Heart left ventricle (tissue), 16 donors: ENCODE measurements at regions of chr17 and their contacts with region 1.

Region 1: GRCh38 chr17:48618256-48618897 is 3.3 kb upstream of the HOXB8 start:
- DNase-seq: peak; percentile 80 to 91 (median 85)
- ATAC-seq: peak; percentile 69 to 92 (median 89)
- H3K4me3 ChIP-seq: no peak overlapping the region
- H3K27ac ChIP-seq: no peak overlapping the region
- H3K4me1 ChIP-seq: peaks cover 0 to 22% (median 2%) of the 10 kb centered on the region in 12 donors
- H3K27me3 ChIP-seq: peaks cover 86 to 100% (median 98%) of the 10 kb centered on the region in 9 donors
- CTCF ChIP-seq: peak; percentile 95 to 99 (median 98)
- POLR2A ChIP-seq: no peak

Region 2: GRCh38 chr17:48024937-48025906 is 593.2 kb before region 1 on chr17:
- intact Hi-C with region 1: loop called in 5 of 10 experiments (anchors 5 to 10 kb)
- DNase-seq: peak; percentile 97 to 99 (median 97)
- ATAC-seq: peak; percentile 88 to 92 (median 89)
- H3K4me3 ChIP-seq: peak overlapping the region; percentile 22 to 69 (median 53)
- H3K27ac ChIP-seq: peak overlapping the region; percentile 7 to 90 (median 80)
- H3K4me1 ChIP-seq: peaks cover 6 to 43% (median 38%) of the 10 kb centered on the region in 12 donors
- H3K27me3 ChIP-seq: peaks cover 0 to 27% (median 0%) of the 10 kb centered on the region in 9 donors
- CTCF ChIP-seq: peak; percentile 63 to 99 (median 76)
- POLR2A ChIP-seq: peak in 1 of 2 donors; percentile 40

Region 3: DNA sequence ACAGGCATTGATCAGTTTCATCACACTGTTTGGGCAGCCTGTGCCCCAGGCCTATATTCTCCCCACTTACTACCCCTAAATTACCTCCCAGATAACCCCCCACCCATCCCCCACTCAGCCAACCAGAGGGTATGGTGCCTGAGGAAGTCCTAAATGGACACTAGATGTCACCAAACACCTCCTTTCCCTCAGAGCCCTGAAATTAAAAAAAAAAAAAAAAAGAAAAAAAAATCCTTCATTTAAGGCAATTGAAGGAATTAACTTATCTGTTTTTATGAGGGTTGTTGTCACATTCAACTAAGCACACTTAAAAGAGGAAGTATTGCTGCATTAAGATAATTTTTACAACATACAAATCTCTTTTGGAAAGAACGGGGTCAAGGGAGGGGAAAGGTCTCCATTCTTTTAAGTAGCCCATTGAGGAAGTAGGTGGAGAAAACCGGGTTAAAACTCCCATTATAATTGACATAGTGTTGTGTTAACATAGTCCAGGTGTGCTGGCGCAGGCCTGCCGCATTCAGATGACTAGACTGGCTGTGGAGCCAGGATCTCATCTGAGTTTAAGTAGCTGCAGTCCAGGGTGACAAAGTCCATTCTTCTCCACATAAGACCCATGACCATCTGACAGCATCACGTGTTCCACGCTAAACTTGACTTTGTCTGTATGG is 464.6 kb before region 1 on chr17:
- intact Hi-C with region 1: loop called in 6 of 10 experiments (anchors 10 kb)
- DNase-seq: no peak
- ATAC-seq: peak in 1 of 4 donors; percentile 33
- H3K4me3 ChIP-seq: no peak overlapping the region
- H3K27ac ChIP-seq: no peak overlapping the region
- H3K4me1 ChIP-seq: no peaks in the 10 kb centered on the region
- H3K27me3 ChIP-seq: peaks cover 5 to 66% (median 21%) of the 10 kb centered on the region in 9 donors
- CTCF ChIP-seq: peak in 11 of 12 donors; percentile 20 to 57 (median 33)
- POLR2A ChIP-seq: no peak

Region 4: DNA sequence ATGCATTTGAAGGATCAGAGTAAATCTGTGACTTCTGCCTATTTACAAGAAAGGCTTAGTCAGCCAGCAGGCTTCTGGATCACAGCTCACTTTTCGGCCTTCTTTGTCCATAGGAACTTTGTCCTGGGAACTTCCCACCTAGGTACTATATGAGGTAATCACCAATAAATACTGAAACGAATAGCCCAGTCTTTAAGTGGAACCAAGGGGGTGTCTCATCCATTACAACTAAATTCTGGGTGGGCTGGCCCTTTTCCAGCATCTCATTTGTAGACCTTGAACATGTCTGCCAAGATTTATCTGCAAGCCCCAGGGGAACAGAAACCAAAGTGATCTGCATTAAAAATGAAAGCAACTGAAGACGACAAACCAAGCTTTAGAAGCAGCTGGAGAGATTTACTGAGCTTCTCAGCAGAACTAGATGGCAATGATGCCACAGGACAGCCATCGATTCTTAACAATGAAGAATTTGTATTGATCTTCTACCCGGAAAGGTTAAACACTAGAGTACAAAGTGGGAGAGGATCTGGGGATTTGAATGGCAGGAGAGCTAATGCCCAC is 455.4 kb before region 1 on chr17:
- intact Hi-C with region 1: loop called in 7 of 10 experiments (anchors 10 kb)
- DNase-seq: no peak
- ATAC-seq: no peak
- H3K4me3 ChIP-seq: no peak overlapping the region
- H3K27ac ChIP-seq: no peak overlapping the region
- H3K4me1 ChIP-seq: peaks cover 0 to 8% (median 0%) of the 10 kb centered on the region in 12 donors
- H3K27me3 ChIP-seq: peaks cover 0 to 38% (median 2%) of the 10 kb centered on the region in 9 donors
- CTCF ChIP-seq: no peak
- POLR2A ChIP-seq: no peak

Region 5: GRCh38 chr17:48259694-48260291 is 358.6 kb before region 1 on chr17:
- intact Hi-C with region 1: loop called in 1 of 10 experiments (anchors 5 kb)
- DNase-seq: no peak
- ATAC-seq: no peak
- H3K4me3 ChIP-seq: no peak overlapping the region
- H3K27ac ChIP-seq: no peak overlapping the region
- H3K4me1 ChIP-seq: no peaks in the 10 kb centered on the region
- H3K27me3 ChIP-seq: peaks cover 0 to 26% (median 2%) of the 10 kb centered on the region in 9 donors
- CTCF ChIP-seq: peak in 10 of 12 donors; percentile 26 to 60 (median 43)
- POLR2A ChIP-seq: no peak

Region 6: GRCh38 chr17:48307814-48308411 is 310.5 kb before region 1 on chr17:
- intact Hi-C with region 1: loop called in 1 of 10 experiments (anchors 1 kb)
- DNase-seq: peak in 3 of 5 donors; percentile 10 to 28 (median 24)
- ATAC-seq: peak in 2 of 4 donors; percentile 53 to 58
- H3K4me3 ChIP-seq: no peak overlapping the region
- H3K27ac ChIP-seq: no peak overlapping the region
- H3K4me1 ChIP-seq: peaks cover 0 to 7% (median 0%) of the 10 kb centered on the region in 12 donors
- H3K27me3 ChIP-seq: peaks cover 0 to 86% (median 47%) of the 10 kb centered on the region in 9 donors
- CTCF ChIP-seq: peak; percentile 51 to 84 (median 69)
- POLR2A ChIP-seq: no peak

Region 7: GRCh38 chr17:48335858-48336500 is 282.4 kb before region 1 on chr17:
- intact Hi-C with region 1: loop called (anchors 1 to 10 kb)
- DNase-seq: no peak
- ATAC-seq: no peak
- H3K4me3 ChIP-seq: no peak overlapping the region
- H3K27ac ChIP-seq: no peak overlapping the region
- H3K4me1 ChIP-seq: no peaks in the 10 kb centered on the region
- H3K27me3 ChIP-seq: peaks cover 4 to 100% (median 57%) of the 10 kb centered on the region in 9 donors
- CTCF ChIP-seq: peak; percentile 59 to 84 (median 68)
- POLR2A ChIP-seq: no peak

Region 8: GRCh38 chr17:48571024-48571818 is 47.2 kb before region 1 on chr17:
- intact Hi-C with region 1: no loop called
- DNase-seq: no peak
- ATAC-seq: no peak
- H3K4me3 ChIP-seq: no peak overlapping the region
- H3K27ac ChIP-seq: peak overlapping the region in 2 of 12 donors; percentile 11 to 97
- H3K4me1 ChIP-seq: peaks cover 0 to 26% (median 0%) of the 10 kb centered on the region in 12 donors
- H3K27me3 ChIP-seq: peaks cover 16 to 100% (median 96%) of the 10 kb centered on the region in 9 donors
- CTCF ChIP-seq: no peak
- POLR2A ChIP-seq: no peak

Region 9: DNA sequence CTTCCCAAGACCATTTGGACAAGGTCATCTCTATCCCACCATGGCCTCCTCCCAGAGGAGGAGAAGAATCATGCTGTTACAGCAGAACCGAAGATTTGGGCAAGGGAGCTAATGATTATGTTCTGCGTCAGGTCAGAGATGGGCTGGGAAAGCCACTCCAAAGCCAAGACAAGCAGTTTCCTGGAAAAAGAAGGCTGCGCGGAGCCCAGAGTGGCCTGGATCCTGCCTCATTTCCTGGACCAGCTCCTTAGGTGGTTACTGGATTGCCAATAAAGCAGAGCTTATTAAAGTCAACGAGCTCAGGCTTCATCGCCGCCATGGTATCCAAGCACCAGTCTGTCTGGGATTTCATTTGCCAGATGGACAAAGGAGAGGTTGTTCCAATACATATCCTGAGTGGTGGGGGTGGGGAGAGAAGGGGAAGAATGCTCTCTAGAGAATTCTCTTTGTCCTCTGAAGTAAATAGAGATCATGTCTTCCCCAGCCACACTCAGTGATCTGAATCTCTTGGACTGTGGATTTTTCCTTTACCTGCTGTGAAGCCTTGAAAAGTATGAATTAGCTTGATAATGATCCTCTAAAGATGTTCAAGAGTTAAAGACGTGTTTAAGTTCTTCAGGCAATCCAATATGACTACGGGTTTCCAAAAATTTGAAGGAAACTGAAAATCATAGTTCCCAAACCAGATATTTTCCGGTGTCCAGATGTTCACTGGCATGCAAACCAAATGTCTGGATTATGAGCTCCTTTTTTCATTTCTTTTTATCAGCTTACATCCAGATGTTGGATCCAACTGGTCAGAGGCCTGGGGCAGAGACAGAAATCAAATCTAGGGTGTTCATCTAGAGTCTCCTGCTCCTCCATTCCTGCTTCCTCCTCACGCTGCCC is 86.2 kb after region 1 on chr17:
- intact Hi-C with region 1: no loop called
- DNase-seq: no peak
- ATAC-seq: no peak
- H3K4me3 ChIP-seq: no peak overlapping the region
- H3K27ac ChIP-seq: no peak overlapping the region
- H3K4me1 ChIP-seq: no peaks in the 10 kb centered on the region
- H3K27me3 ChIP-seq: peaks cover 14 to 99% (median 43%) of the 10 kb centered on the region in 9 donors
- CTCF ChIP-seq: no peak
- POLR2A ChIP-seq: no peak